HepG2 (cell line): ENCODE measurements at regions of chr2 and their contacts with region 1.

Region 1: DNA sequence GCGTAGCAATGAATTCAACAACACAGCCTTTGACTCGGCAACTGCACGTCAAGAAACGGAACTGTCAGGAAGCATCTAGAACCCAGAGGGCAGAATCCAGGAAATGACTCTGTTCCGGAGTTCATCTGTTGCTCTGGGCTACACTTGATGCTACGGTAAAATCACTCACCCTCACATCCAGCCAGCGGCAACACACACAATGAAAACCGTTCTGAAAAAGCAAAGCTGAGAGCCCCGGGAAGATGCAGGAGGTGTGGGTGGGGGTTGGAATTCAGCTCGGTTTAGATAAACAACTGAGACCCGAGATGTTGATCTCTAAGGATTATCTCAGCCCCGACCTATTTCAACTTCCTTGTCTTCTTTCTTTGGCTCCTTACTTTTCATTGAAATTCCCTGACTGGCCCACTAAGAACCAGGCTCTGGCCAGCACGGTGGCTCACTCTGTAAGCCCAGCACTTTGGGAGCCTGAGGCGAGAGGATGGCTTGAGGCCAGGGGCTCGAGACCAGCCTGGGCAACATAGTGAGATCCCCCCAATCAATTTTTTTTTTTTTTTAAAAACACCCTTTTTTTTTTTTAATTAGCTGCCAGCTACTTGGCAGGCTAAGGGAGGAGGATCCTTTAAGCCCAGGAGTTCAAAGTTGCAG is 13.3 kb upstream of the RAB17 start:
- DNase-seq: peak; percentile 40
- ATAC-seq: no peak
- H3K4me3 ChIP-seq: peak overlapping the region in 1 of 3 experiments; percentile 14; a peak in 1 of 6 replicates
- H3K27ac ChIP-seq: no peak overlapping the region
- H3K4me1 ChIP-seq: peaks cover 69% of the 10 kb centered on the region
- H3K27me3 ChIP-seq: peaks cover 5 to 6% of the 10 kb centered on the region in 2 experiments; a peak in 4 of 5 replicates
- CTCF ChIP-seq: no peak
- EP300 ChIP-seq: no peak
- POLR2A ChIP-seq: no peak
- RAD21 ChIP-seq: no peak

Region 2: GRCh38 chr2:237590272-237591140 is 13.3 kb before region 1 on chr2 and contains the start of gene RAB17:
- CTCF ChIA-PET with region 1: no interaction called
- POLR2A ChIA-PET with region 1: interaction called, 40 read pairs
- in situ Hi-C with region 1: no loop called
- intact Hi-C with region 1: no loop called
- DNase-seq: peak; percentile 90
- ATAC-seq: peak; percentile 79
- H3K4me3 ChIP-seq: peak within 1 kb of the TSS; percentile 58 to 80 (median 76)
- H3K27ac ChIP-seq: peak within 1 kb of the TSS; percentile 68
- H3K4me1 ChIP-seq: peaks cover 97% of the 10 kb centered on the region
- H3K27me3 ChIP-seq: no peaks in the 10 kb centered on the region; a peak in 1 of 5 replicates
- CTCF ChIP-seq: peak; percentile 37
- EP300 ChIP-seq: peak; percentile 47 to 88; a peak in 2 of 4 replicates
- POLR2A ChIP-seq: peak; percentile 51 to 71; a peak in 3 of 4 replicates
- RAD21 ChIP-seq: no peak; the same call in 1 of the 2 replicates
- total RNA-seq, gene RAB17: 68.0 and 70.0 TPM in 2 replicates

Region 3: GRCh38 chr2:237674731-237675276 is 71.0 kb after region 1 on chr2:
- CTCF ChIA-PET with region 1: interaction called, 4 read pairs
- POLR2A ChIA-PET with region 1: interaction called, 3 read pairs
- in situ Hi-C with region 1: no loop called
- intact Hi-C with region 1: loop called (anchors 2 kb)
- DNase-seq: peak; percentile 66
- ATAC-seq: peak; percentile 93
- H3K4me3 ChIP-seq: peak overlapping the region in 2 of 3 experiments; percentile 13 to 53; a peak in 3 of 6 replicates
- H3K27ac ChIP-seq: peak overlapping the region; percentile 46
- H3K4me1 ChIP-seq: peaks cover 83% of the 10 kb centered on the region
- H3K27me3 ChIP-seq: no peaks in the 10 kb centered on the region
- CTCF ChIP-seq: peak; percentile 36; the same call in 1 of the 2 replicates
- EP300 ChIP-seq: no peak; a peak in 1 of 4 replicates
- POLR2A ChIP-seq: peak; percentile 24 to 34; a peak in 1 of 4 replicates
- RAD21 ChIP-seq: no peak

Region 4: GRCh38 chr2:237744613-237745249 is 140.9 kb after region 1 on chr2:
- CTCF ChIA-PET with region 1: interaction called, 22 read pairs
- POLR2A ChIA-PET with region 1: interaction called, 5 read pairs
- in situ Hi-C with region 1: loop called (anchors 5 kb)
- intact Hi-C with region 1: loop called (anchors 1 kb)
- DNase-seq: peak; percentile 62
- ATAC-seq: peak; percentile 76
- H3K4me3 ChIP-seq: no peak overlapping the region; a peak in 1 of 6 replicates
- H3K27ac ChIP-seq: peak overlapping the region; percentile 71
- H3K4me1 ChIP-seq: peaks cover 54% of the 10 kb centered on the region
- H3K27me3 ChIP-seq: no peaks in the 10 kb centered on the region
- CTCF ChIP-seq: peak; percentile 99
- EP300 ChIP-seq: no peak
- POLR2A ChIP-seq: no peak
- RAD21 ChIP-seq: peak; percentile 98